ENCODE measurements at regions of chr12 and their contacts with region 1.

Region 1: GRCh38 chr12:30047499-30048262 is 263.9 kb upstream of the TMTC1 start:
- DNase-seq: no peak
- H3K4me3 Mint-ChIP-seq: no peak overlapping the region
- H3K27ac Mint-ChIP-seq: no peak overlapping the region
- H3K4me1 Mint-ChIP-seq: no peaks in the 10 kb centered on the region
- H3K27me3 Mint-ChIP-seq: no peaks in the 10 kb centered on the region

Region 2: GRCh38 chr12:29164477-29165393 is 882.9 kb before region 1 on chr12:
- CTCF ChIA-PET with region 1: no interaction called
- intact Hi-C with region 1: loop called (anchors 5 kb)
- DNase-seq: no peak
- H3K4me3 Mint-ChIP-seq: no peak overlapping the region
- H3K27ac Mint-ChIP-seq: no peak overlapping the region
- H3K4me1 Mint-ChIP-seq: peaks cover 13% of the 10 kb centered on the region
- H3K27me3 Mint-ChIP-seq: no peaks in the 10 kb centered on the region

Region 3: DNA sequence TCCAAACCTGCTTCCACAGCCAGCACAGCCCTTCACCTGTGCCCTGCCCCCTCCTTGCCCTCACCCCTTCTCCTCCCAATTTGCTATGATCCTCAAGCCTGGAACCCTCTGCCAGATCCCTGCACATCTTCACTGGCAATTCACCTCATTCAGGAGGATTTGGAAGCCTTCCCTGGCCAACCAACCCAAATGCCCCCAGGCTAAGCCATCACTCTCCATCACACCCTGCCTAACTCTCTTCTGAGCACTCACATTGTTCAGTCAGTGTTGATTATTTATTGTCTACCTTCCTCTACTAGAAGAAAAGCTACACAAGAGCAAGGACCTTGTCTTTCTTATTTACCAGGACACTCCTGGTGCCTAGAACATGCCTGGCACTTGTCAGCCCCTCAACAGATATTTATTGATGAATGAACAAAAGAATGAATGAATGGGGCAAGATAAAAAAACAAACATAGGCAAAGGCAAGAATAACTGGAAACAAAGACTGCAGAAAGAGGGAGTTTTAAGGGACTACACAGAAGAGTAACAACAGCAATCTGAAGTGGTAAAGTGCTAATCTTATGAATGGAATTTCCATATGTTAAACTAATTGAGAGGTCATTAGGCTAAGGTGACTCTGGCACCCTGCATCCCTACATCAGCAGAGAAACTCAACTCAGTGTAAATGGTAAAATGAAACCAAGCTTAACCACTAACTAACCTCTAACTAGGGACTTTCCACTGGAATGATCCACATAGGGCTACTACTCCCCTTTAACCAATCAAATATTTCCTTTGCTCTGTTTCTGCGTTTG is 297.4 kb before region 1 on chr12:
- CTCF ChIA-PET with region 1: no interaction called
- intact Hi-C with region 1: no loop called
- DNase-seq: no peak
- H3K4me3 Mint-ChIP-seq: no peak overlapping the region
- H3K27ac Mint-ChIP-seq: no peak overlapping the region
- H3K4me1 Mint-ChIP-seq: no peaks in the 10 kb centered on the region
- H3K27me3 Mint-ChIP-seq: peaks cover 6% of the 10 kb centered on the region